Activated CD4-positive, alpha-beta memory T cell treated with anti-CD3 and anti-CD28 coated beads for 36 hours (primary cell): ENCODE measurements at regions of chr2 and their contacts with region 1.

Region 1: GRCh38 chr2:101736861-101737291 is 39.4 kb downstream of the MAP4K4 start:
- DNase-seq: peak; percentile 80
- H3K4me3 Mint-ChIP-seq: no peak overlapping the region
- H3K27ac Mint-ChIP-seq: peak overlapping the region; percentile 59
- H3K4me1 Mint-ChIP-seq: peaks cover 77% of the 10 kb centered on the region
- H3K27me3 Mint-ChIP-seq: no peaks in the 10 kb centered on the region

Region 2: GRCh38 chr2:101486258-101486701 is 250.6 kb before region 1 on chr2:
- CTCF ChIA-PET with region 1: no interaction called
- POLR2A ChIA-PET with region 1: no interaction called
- intact Hi-C with region 1: no loop called
- DNase-seq: peak; percentile 44
- H3K4me3 Mint-ChIP-seq: peak overlapping the region; percentile 5
- H3K27ac Mint-ChIP-seq: peak overlapping the region; percentile 34
- H3K4me1 Mint-ChIP-seq: peaks cover 17% of the 10 kb centered on the region
- H3K27me3 Mint-ChIP-seq: no peaks in the 10 kb centered on the region

Region 3: GRCh38 chr2:101704046-101704466 is 32.8 kb before region 1 on chr2:
- CTCF ChIA-PET with region 1: interaction called, 4 read pairs
- POLR2A ChIA-PET with region 1: interaction called, 5 read pairs
- intact Hi-C with region 1: loop called (anchors 1 kb)
- DNase-seq: peak; percentile 59
- H3K4me3 Mint-ChIP-seq: peak overlapping the region; percentile 62
- H3K27ac Mint-ChIP-seq: peak overlapping the region; percentile 87
- H3K4me1 Mint-ChIP-seq: peaks cover 74% of the 10 kb centered on the region
- H3K27me3 Mint-ChIP-seq: no peaks in the 10 kb centered on the region

Region 4: DNA sequence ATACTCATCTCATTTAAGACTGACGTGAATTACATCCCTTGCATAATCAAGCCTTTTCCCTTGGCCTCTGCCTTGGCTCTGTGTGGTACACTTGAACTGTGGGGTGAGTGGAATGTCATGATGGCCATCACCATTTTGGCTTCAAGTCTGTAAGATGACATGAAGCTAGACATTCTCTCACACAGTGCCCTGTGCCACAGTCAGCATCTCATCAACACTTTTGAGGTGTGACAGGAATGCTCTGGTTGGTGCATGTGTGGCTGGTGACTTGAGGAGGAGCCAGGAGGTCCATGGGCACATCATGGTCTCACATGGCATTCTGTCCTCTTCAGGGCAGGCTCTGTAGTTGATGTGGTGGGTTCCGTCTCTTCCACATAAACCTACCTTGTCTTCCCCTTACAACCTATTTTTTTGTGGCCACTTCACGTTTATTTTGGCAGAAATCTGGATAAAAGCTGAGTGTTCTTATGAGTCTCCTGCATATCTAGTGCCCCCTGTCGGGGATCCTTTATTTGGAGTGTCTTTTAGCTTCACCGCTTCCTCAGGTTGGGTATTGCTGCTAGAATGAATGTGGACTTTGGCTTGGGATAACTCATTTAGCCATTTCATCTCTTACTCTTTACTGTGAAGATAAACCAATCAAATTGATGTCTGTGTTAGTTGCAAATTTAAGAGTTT is 11.2 kb before region 1 on chr2:
- CTCF ChIA-PET with region 1: interaction called, 17 read pairs
- POLR2A ChIA-PET with region 1: interaction called, 5 read pairs
- intact Hi-C with region 1: no loop called
- DNase-seq: no peak
- H3K4me3 Mint-ChIP-seq: no peak overlapping the region
- H3K27ac Mint-ChIP-seq: no peak overlapping the region
- H3K4me1 Mint-ChIP-seq: peaks cover 88% of the 10 kb centered on the region
- H3K27me3 Mint-ChIP-seq: no peaks in the 10 kb centered on the region

Region 5: GRCh38 chr2:101752716-101753616 is 16.1 kb after region 1 on chr2:
- CTCF ChIA-PET with region 1: interaction called, 6 read pairs
- POLR2A ChIA-PET with region 1: interaction called, 5 read pairs
- intact Hi-C with region 1: loop called (anchors 1 kb)
- DNase-seq: no peak
- H3K4me3 Mint-ChIP-seq: no peak overlapping the region
- H3K27ac Mint-ChIP-seq: no peak overlapping the region
- H3K4me1 Mint-ChIP-seq: peaks cover 70% of the 10 kb centered on the region
- H3K27me3 Mint-ChIP-seq: no peaks in the 10 kb centered on the region

Region 6: GRCh38 chr2:101759162-101759561 is 22.3 kb after region 1 on chr2:
- CTCF ChIA-PET with region 1: interaction called, 6 read pairs
- POLR2A ChIA-PET with region 1: interaction called, 5 read pairs
- intact Hi-C with region 1: loop called (anchors 1 kb)
- DNase-seq: no peak
- H3K4me3 Mint-ChIP-seq: no peak overlapping the region
- H3K27ac Mint-ChIP-seq: no peak overlapping the region
- H3K4me1 Mint-ChIP-seq: peaks cover 67% of the 10 kb centered on the region
- H3K27me3 Mint-ChIP-seq: no peaks in the 10 kb centered on the region